ENCODE measurements at regions of chr5 and their contacts with region 1.

Region 1: GRCh38 chr5:141524604-141525597 is 36.0 kb downstream of the PCDHGC5 start:
- DNase-seq: peak; percentile 63 to 78 (median 67)
- H3K4me3 ChIP-seq: no peak overlapping the region
- H3K27ac ChIP-seq: no peak overlapping the region
- H3K4me1 ChIP-seq: peaks cover 7 to 19% (median 8%) of the 10 kb centered on the region in 4 experiments
- H3K27me3 ChIP-seq: no peaks in the 10 kb centered on the region

Region 2: DNA sequence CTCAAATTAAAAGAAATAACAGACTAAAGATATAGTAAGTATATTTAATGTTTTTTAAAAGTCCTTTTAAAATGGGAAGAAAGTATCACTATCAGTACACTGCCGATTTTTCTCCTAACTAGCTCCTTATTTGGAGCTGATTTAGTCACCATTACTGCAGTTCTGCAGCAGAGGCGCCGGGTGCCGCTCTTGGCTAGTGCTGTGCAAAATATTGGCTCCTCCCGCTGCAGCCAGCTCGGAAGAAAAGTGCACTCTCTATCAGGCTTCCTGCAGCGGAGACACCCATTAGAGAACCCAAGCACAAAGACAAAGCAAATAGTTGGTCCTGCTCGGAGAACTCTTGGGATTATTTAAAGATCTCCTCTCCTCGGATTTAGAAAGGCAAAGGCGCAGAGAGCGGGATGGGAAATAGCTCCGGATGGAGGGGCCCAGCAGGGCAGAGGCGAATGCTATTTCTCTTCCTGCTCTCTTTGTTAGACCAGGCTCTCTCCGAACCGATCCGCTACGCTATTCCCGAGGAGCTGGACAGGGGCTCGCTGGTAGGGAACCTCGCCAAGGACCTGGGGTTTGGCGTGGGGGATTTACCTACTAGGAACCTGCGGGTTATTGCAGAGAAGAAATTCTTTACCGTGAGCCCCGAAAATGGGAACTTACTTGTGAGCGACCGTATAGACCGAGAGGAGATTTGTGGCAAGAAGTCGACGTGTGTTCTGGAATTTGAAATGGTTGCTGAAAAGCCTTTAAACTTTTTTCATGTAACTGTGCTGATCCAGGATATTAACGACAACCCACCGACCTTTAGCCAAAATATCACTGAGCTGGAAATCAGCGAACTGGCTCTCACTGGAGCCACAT is 154.7 kb before region 1 on chr5 and contains the start of gene PCDHGB3:
- CTCF ChIA-PET with region 1: interaction called, 16 read pairs
- POLR2A ChIA-PET with region 1: no interaction called
- DNase-seq: peak; percentile 65 to 85 (median 80)
- H3K4me3 ChIP-seq: peak within 1 kb of the TSS; percentile 40 to 78 (median 59)
- H3K27ac ChIP-seq: no peak within 1 kb of the TSS
- H3K4me1 ChIP-seq: peaks cover 0 to 6% (median under 1%) of the 10 kb centered on the region in 4 experiments
- H3K27me3 ChIP-seq: peaks cover 13 to 82% (median 23%) of the 10 kb centered on the region in 5 experiments

Region 3: DNA sequence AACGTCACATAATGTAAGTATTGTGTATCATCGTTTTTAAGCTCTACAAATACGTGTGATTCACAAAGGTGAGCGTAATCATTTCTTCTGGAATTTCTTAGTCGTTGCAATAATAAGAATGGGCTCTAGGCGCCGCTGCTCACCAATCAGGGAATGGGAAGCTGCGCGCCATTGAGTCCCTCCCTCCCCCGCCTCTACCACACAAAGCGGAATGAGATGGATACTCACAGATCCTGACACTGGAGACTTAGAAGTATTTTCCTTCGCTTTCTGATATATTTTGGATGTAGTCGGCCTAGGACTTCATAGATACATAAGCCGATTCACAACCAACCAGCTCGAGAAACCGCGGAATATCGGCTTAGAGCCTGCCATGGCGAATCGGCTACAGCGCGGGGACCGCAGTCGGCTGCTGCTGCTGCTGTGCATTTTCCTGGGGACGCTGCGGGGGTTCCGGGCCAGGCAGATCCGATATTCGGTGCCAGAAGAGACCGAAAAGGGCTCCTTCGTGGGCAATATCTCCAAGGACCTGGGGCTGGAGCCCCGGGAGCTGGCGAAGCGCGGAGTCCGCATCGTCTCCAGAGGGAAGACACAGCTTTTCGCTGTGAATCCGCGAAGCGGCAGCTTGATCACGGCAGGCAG is 103.9 kb before region 1 on chr5 and contains the start of gene PCDHGA11:
- CTCF ChIA-PET with region 1: interaction called, 77 read pairs
- POLR2A ChIA-PET with region 1: no interaction called
- DNase-seq: peak; percentile 75 to 81 (median 80)
- H3K4me3 ChIP-seq: peak within 1 kb of the TSS; percentile 36 to 81 (median 63)
- H3K27ac ChIP-seq: no peak within 1 kb of the TSS
- H3K4me1 ChIP-seq: peaks cover 0 to 18% (median 9%) of the 10 kb centered on the region in 4 experiments
- H3K27me3 ChIP-seq: peaks cover 30 to 89% (median 37%) of the 10 kb centered on the region in 5 experiments

Region 4: GRCh38 chr5:141475625-141476131 is 49.2 kb before region 1 on chr5 and contains the start of gene PCDHGC3:
- CTCF ChIA-PET with region 1: interaction called, 10 read pairs
- POLR2A ChIA-PET with region 1: no interaction called
- DNase-seq: peak; percentile 50 to 67 (median 52)
- H3K4me3 ChIP-seq: peak within 1 kb of the TSS; percentile 40 to 87 (median 69)
- H3K27ac ChIP-seq: no peak within 1 kb of the TSS
- H3K4me1 ChIP-seq: peaks cover 11 to 23% (median 16%) of the 10 kb centered on the region in 4 experiments
- H3K27me3 ChIP-seq: peaks cover 18 to 58% (median 30%) of the 10 kb centered on the region in 5 experiments

Region 5: GRCh38 chr5:141547488-141547887 is 22.6 kb after region 1 on chr5:
- CTCF ChIA-PET with region 1: interaction called, 14 read pairs
- POLR2A ChIA-PET with region 1: no interaction called
- DNase-seq: peak; percentile 46 to 86 (median 76)
- H3K4me3 ChIP-seq: no peak overlapping the region
- H3K27ac ChIP-seq: no peak overlapping the region
- H3K4me1 ChIP-seq: peaks cover 0 to 4% (median 1%) of the 10 kb centered on the region in 4 experiments
- H3K27me3 ChIP-seq: no peaks in the 10 kb centered on the region

Region 6: GRCh38 chr5:141564216-141564692 is 39.4 kb after region 1 on chr5:
- CTCF ChIA-PET with region 1: interaction called, 32 read pairs
- POLR2A ChIA-PET with region 1: no interaction called
- DNase-seq: peak; percentile 95 to 97 (median 97)
- H3K4me3 ChIP-seq: peak overlapping the region in 1 of 7 experiments; percentile 4
- H3K27ac ChIP-seq: no peak overlapping the region
- H3K4me1 ChIP-seq: peaks cover 0 to 10% (median 3%) of the 10 kb centered on the region in 4 experiments
- H3K27me3 ChIP-seq: no peaks in the 10 kb centered on the region

Measured in common myeloid progenitor, CD34-positive (primary cell).